Posterior vena cava (tissue), 2 donors: ENCODE measurements at regions of chr14 and their contacts with region 1.

Region 1: DNA sequence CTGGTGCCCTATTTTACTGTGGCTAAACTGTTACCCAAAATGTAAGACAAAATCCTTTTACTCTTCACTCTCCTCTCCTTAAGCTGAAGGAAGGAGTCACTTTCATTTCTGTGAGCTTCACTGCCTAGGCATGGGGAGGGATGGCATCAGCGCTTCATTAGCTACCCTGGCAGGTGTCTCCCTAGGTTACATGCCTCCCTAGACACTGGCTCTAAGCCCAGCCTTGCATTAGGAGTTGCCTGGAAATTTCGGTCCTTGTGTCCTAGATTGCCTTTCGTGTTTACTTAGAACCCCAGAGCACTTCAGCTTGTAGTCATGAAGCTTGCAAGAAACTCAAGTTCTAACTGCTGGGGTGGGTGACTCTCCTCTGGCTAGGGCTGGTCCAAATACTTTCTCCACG is 520.5 kb upstream of the STXBP6 start:
- DNase-seq: no peak

Region 2: GRCh38 chr14:25551674-25552073 is 18.8 kb before region 1 on chr14:
- intact Hi-C with region 1: loop called in 1 of 2 experiments (anchors 1 kb)
- DNase-seq: no peak